ENCODE measurements at regions of chr11 and their contacts with region 1.

Region 1: DNA sequence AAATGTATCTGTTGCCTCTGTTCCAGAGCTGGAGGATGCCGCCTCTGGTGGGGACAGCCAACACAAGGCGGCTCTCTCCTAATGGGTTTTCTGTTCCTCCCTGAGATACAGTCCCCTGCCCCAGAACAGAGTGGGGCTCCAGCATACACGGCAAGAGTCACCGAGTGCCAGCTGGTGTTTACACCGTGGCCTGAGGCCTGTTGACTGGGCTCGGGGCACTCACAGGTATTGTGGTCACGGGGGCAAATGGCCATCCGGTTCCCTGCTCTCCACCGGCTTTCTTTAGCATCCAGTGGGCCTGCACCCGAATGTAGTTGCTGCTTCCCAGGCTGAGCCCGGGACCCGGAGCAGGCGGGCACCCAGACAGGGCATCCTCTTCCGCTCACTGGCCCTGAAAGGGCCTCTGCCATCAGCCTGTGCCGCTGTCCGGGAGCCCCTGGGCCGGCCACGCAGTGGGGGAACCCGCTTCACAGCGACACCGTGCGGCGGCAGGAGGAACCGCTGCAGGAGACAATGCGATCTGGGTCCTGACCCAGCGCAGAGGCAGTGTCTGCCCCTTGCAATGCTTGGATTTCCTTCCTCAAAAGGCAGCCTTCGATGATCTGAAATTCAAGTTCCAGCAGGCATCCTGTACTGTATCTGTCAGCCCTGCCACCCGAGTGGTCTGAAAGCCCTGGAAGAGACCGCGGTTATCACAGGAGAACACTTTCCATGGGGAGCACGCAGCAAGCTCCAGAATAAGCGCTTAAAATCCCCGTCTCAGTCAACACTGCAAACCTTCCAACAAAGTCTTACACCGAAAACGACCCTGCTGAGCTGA is 859 bp upstream of the KRTAP5-5 start:
- DNase-seq: peak; percentile 51 to 82 (median 75)
- ATAC-seq: peak; percentile 75 to 80
- H3K4me3 ChIP-seq: no peak overlapping the region
- H3K27ac ChIP-seq: no peak overlapping the region
- H3K4me1 ChIP-seq: no peaks in the 10 kb centered on the region
- H3K27me3 ChIP-seq: no peaks in the 10 kb centered on the region

Region 2: DNA sequence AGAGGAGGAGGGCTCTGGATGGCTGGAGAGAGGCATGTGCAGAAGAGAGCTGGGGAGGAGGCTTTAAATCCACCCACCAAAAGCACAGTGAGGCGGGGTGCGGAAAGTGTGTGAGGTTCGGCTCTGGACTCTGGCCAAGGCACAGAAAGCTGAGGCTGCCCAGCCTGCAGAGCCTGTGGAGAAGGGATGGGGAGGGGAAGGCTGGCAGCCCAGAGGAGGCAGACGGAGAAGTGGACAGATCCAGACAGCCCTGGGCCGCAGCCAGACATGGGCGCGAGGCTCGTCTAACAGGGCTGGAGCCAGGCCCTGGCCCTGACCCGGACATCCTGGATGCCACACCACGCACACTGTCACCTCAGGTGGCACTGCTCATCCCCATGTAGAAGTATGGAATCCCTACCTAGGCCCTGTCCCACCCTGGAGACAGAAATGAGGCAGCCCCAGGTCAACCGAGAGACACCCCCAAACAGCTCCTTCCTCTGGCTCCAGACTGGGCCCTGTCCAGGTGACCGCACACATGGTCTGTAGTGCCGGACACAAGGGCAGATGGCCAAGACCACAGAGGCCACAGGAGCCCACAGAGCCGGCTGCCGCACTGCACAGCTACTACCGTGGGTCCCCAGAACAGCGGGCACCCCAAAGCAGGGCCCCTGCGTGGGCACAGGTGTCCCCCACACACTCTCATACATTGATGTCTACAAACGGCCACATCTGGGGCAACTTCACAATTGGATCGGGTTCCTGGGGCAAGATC is 125.6 kb before region 1 on chr11:
- intact Hi-C with region 1: no loop called
- DNase-seq: peak; percentile 66 to 85 (median 81)
- ATAC-seq: peak; percentile 69 to 71
- H3K4me3 ChIP-seq: no peak overlapping the region
- H3K27ac ChIP-seq: peak overlapping the region; percentile 4
- H3K4me1 ChIP-seq: peaks cover 26% of the 10 kb centered on the region
- H3K27me3 ChIP-seq: no peaks in the 10 kb centered on the region

Region 3: GRCh38 chr11:1546536-1547400 is 81.9 kb before region 1 on chr11:
- intact Hi-C with region 1: loop called in 3 of 4 experiments (anchors 10 kb)
- DNase-seq: peak in 2 of 3 donors; percentile 78 to 81
- ATAC-seq: peak; percentile 50 to 59
- H3K4me3 ChIP-seq: peak overlapping the region; percentile 30
- H3K27ac ChIP-seq: no peak overlapping the region
- H3K4me1 ChIP-seq: no peaks in the 10 kb centered on the region
- H3K27me3 ChIP-seq: no peaks in the 10 kb centered on the region